H1 (cell line): ENCODE measurements at regions of chr2 and their contacts with region 1.

Region 1: GRCh38 chr2:172878260-172878659 is 142.6 kb downstream of the RAPGEF4 start:
- DNase-seq: no peak
- H3K4me3 ChIP-seq: no peak overlapping the region
- H3K27ac ChIP-seq: no peak overlapping the region
- H3K4me1 ChIP-seq: no peaks in the 10 kb centered on the region
- H3K27me3 ChIP-seq: no peaks in the 10 kb centered on the region; a peak in 1 of 7 replicates
- CTCF ChIP-seq: no peak
- EP300 ChIP-seq: no peak
- POLR2A ChIP-seq: no peak
- RAD21 ChIP-seq: no peak

Region 2: GRCh38 chr2:172894689-172895387 is 16.6 kb after region 1 on chr2:
- CTCF ChIA-PET with region 1: interaction called, 11 read pairs
- POLR2A ChIA-PET with region 1: no interaction called
- DNase-seq: no peak
- H3K4me3 ChIP-seq: no peak overlapping the region
- H3K27ac ChIP-seq: no peak overlapping the region
- H3K4me1 ChIP-seq: no peaks in the 10 kb centered on the region
- H3K27me3 ChIP-seq: no peaks in the 10 kb centered on the region
- CTCF ChIP-seq: no peak
- EP300 ChIP-seq: no peak
- POLR2A ChIP-seq: no peak
- RAD21 ChIP-seq: no peak